ENCODE measurements at regions of chr10 and their contacts with region 1.

Region 1: GRCh38 chr10:59265141-59265540 is 88.7 kb downstream of the PHYHIPL start:
- DNase-seq: no peak
- ATAC-seq: no peak
- H3K4me3 ChIP-seq: no peak overlapping the region
- H3K27ac ChIP-seq: no peak overlapping the region
- H3K4me1 ChIP-seq: peaks cover 0 to 9% (median 0%) of the 10 kb centered on the region in 12 donors
- H3K27me3 ChIP-seq: no peaks in the 10 kb centered on the region
- CTCF ChIP-seq: no peak
- POLR2A ChIP-seq: no peak

Region 2: DNA sequence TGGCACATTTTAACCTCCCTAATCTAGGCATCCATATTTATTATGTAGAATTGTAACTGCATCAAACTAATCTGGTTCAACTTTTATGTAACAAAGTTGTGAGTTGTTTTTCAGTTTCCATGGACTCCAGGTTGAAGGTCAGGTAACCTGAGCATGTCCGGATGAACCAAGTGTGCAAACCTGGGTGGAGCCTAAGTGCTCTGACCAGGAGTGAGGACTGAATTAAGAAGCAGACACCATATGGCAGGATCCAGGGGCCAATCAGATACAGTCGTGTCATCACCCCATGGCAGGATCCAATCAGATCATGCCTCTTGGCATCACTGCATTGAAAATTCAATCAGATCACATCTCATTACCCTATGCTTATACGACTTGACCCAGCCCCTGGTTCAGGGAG is 129.9 kb before region 1 on chr10:
- intact Hi-C with region 1: no loop called
- DNase-seq: no peak
- ATAC-seq: no peak
- H3K4me3 ChIP-seq: no peak overlapping the region
- H3K27ac ChIP-seq: no peak overlapping the region
- H3K4me1 ChIP-seq: peaks cover 0 to 14% (median 0%) of the 10 kb centered on the region in 12 donors
- H3K27me3 ChIP-seq: no peaks in the 10 kb centered on the region
- CTCF ChIP-seq: no peak
- POLR2A ChIP-seq: no peak

Region 3: DNA sequence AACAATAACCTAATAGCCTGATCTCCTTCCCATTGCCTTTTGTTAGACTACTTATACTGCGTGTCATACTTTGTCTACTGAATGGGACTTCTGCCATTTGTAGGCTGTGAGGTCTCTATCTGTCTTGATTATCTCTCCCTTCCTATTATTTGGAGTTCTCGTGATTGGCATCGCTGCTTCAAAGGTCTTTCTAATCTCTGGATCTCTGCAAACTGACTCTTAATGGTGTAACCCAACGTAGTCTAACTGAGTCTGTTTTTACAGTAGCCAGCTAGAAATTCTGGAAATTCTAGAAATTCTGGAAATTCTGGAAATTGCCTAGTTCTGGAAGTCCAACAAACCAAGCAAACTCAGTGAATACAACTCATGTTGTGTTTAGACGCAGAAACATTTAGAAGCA is 58.9 kb before region 1 on chr10:
- intact Hi-C with region 1: no loop called
- DNase-seq: no peak
- ATAC-seq: no peak
- H3K4me3 ChIP-seq: no peak overlapping the region
- H3K27ac ChIP-seq: no peak overlapping the region
- H3K4me1 ChIP-seq: no peaks in the 10 kb centered on the region
- H3K27me3 ChIP-seq: no peaks in the 10 kb centered on the region
- CTCF ChIP-seq: no peak
- POLR2A ChIP-seq: no peak

Region 4: DNA sequence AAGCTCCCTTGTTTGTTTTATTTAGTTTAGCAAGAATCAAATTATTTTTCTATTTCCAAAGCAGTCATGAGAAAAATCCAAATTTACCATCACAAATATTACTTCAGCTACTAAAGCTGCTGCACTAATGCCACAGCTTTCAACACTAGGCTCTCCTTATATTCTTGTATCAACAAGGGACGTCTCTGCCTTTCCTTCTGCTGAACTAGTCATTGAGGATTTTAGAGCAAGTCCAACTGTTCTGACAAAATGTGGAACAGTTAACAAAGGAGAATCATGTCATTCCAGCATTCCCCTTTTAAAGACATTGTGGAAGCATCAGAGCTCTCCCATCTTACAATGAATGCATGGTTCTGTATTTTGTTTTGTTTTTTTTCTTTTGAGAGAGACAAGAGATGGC is 68.6 kb after region 1 on chr10:
- intact Hi-C with region 1: no loop called
- DNase-seq: no peak
- ATAC-seq: no peak
- H3K4me3 ChIP-seq: no peak overlapping the region
- H3K27ac ChIP-seq: peak overlapping the region in 5 of 12 donors; percentile 13 to 37 (median 27)
- H3K4me1 ChIP-seq: peaks cover 0 to 32% (median 17%) of the 10 kb centered on the region in 12 donors
- H3K27me3 ChIP-seq: no peaks in the 10 kb centered on the region
- CTCF ChIP-seq: no peak
- POLR2A ChIP-seq: no peak

Region 5: DNA sequence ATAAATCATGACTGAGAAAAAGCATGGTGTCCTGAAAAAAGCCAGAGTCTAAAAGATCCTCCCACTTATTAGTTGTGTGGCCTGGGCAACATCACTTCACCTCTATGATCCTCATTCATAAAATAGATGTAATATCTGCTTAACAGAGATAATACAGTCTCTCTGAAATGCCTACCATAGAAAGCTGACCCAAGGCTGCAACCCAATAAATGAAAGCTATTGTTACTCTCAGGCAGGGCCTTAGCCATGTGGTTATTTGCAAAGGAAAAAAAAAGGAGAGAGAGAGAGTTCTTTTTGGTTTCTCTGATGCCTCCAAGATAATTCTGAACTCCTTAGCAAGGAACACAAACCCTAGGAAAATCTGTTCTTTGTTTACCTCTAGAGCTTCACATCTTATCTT is 89.3 kb after region 1 on chr10:
- intact Hi-C with region 1: loop called in 1 of 10 experiments (anchors 10 kb)
- DNase-seq: no peak
- ATAC-seq: no peak
- H3K4me3 ChIP-seq: no peak overlapping the region
- H3K27ac ChIP-seq: no peak overlapping the region
- H3K4me1 ChIP-seq: peaks cover 0 to 18% (median 10%) of the 10 kb centered on the region in 12 donors
- H3K27me3 ChIP-seq: no peaks in the 10 kb centered on the region
- CTCF ChIP-seq: no peak
- POLR2A ChIP-seq: no peak

Region 6: GRCh38 chr10:59465088-59465487 is 199.9 kb after region 1 on chr10:
- intact Hi-C with region 1: no loop called
- DNase-seq: no peak
- ATAC-seq: peak in 1 of 4 donors; percentile 52
- H3K4me3 ChIP-seq: no peak overlapping the region
- H3K27ac ChIP-seq: no peak overlapping the region
- H3K4me1 ChIP-seq: peaks cover 0 to 11% (median 0%) of the 10 kb centered on the region in 12 donors
- H3K27me3 ChIP-seq: no peaks in the 10 kb centered on the region
- CTCF ChIP-seq: peak in 10 of 12 donors; percentile 22 to 63 (median 44)
- POLR2A ChIP-seq: no peak